ENCODE measurements at regions of chr12 and their contacts with region 1.

Region 1: DNA sequence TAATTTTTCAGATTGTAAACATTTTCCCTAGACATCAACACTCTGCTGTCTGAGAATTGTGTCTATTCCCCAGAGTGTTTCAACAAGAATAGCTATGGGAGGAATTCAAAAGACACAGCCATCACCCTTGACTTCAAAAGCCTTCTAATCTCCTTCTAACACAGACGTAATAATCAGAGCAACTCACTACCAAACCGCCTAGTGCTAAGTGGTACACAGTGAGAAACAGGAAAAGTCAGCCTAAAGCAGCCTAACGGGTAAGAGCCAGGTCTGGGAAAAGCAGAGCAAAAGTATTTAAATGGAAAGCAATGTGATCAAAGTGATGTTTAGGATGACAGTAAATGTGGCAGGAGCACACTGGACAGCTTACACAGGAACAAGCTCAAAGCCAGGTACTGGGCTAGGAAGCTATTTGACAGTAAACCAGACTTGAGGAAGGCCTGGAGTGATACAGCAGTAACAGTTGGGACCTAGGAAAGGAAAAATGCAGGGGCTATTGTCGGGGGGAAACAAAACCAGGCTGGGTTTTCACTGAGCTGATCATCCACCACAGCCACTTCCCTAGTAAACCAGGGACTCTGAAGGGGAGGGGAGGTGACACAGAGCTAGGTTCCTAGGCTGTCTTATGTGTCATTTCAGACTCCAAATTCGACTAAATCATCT is 29.4 kb downstream of the CORO1C start:
- DNase-seq: peak in 2 of 4 experiments; percentile 35 to 68
- ATAC-seq: peak; percentile 76
- H3K4me3 ChIP-seq: no peak overlapping the region
- H3K27ac ChIP-seq: peak overlapping the region; percentile 63
- H3K4me1 ChIP-seq: peaks cover 16 to 60% of the 10 kb centered on the region in 2 experiments
- H3K27me3 ChIP-seq: no peaks in the 10 kb centered on the region
- CTCF ChIP-seq: no peak
- EP300 ChIP-seq: peak; percentile 24; the same call in 1 of the 2 replicates
- POLR2A ChIP-seq: no peak
- RAD21 ChIP-seq: no peak

Region 2: DNA sequence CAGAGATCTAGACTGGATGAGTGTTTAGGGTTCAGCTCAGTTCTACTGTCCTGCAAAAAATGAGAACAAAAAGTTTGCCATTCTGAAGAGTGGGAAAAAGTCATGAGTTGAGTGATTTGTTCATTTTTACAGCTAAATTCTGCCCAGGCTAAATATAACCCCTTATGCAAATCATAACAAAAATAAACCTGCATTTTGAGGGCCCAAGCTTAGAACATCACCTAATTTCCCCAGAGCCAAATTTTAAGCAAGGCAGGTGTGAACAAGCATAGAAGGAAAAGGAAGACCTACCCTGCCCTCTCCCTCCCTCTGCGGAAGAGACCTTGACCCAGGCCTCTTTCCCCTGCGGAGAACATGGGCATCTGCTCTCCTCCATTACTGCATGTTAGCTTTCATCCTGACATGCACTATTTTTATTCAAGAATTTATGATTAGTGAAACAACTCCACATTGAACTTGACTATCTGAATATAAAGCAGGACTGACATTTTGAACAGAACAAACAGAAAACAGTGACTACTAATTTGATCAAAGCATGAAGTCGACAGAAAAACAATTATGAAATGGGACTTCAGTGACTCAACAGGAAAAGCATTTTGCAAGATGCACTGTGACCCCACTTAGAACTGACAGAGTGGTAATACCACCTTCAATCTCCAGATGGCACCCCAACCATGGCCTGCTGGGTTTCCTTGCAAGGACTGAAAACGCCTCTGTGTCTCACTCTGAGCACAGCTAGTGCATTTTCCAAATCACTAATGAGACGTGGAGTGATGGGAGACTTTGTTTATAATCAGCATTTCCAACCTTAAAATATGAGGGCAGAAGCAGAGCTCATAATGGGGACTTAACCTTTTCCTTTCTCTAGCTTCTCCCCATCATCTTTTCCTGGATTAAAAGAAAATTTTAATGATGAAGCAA is 37.3 kb before region 1 on chr12:
- CTCF ChIA-PET with region 1: no interaction called
- POLR2A ChIA-PET with region 1: no interaction called
- in situ Hi-C with region 1: no loop called
- intact Hi-C with region 1: no loop called
- DNase-seq: peak; percentile 74 to 88 (median 78)
- ATAC-seq: peak; percentile 98
- H3K4me3 ChIP-seq: no peak overlapping the region
- H3K27ac ChIP-seq: peak overlapping the region; percentile 60; the same call in 2 of the 3 replicates
- H3K4me1 ChIP-seq: peaks cover 0 to 13% of the 10 kb centered on the region in 2 experiments; a peak in 3 of 5 replicates
- H3K27me3 ChIP-seq: no peaks in the 10 kb centered on the region
- CTCF ChIP-seq: peak; percentile 90 to 96 (median 91)
- EP300 ChIP-seq: peak; percentile 12; the same call in 1 of the 2 replicates
- POLR2A ChIP-seq: no peak
- RAD21 ChIP-seq: peak; percentile 95 to 99

Region 3: GRCh38 chr12:108712165-108712924 is 10.4 kb after region 1 on chr12:
- CTCF ChIA-PET with region 1: no interaction called
- POLR2A ChIA-PET with region 1: interaction called, 52 read pairs
- in situ Hi-C with region 1: no loop called
- intact Hi-C with region 1: no loop called
- DNase-seq: no peak
- ATAC-seq: no peak
- H3K4me3 ChIP-seq: no peak overlapping the region
- H3K27ac ChIP-seq: no peak overlapping the region
- H3K4me1 ChIP-seq: peaks cover 18 to 26% of the 10 kb centered on the region in 2 experiments; a peak in 4 of 5 replicates
- H3K27me3 ChIP-seq: no peaks in the 10 kb centered on the region
- CTCF ChIP-seq: no peak
- EP300 ChIP-seq: no peak
- POLR2A ChIP-seq: no peak
- RAD21 ChIP-seq: no peak

Region 4: GRCh38 chr12:108731105-108731865 is 29.4 kb after region 1 on chr12 and contains the start of gene CORO1C:
- CTCF ChIA-PET with region 1: no interaction called
- POLR2A ChIA-PET with region 1: interaction called, 7 read pairs
- in situ Hi-C with region 1: no loop called
- intact Hi-C with region 1: loop called (anchors 2 kb)
- DNase-seq: peak; percentile 95 to 97 (median 96)
- ATAC-seq: peak; percentile 77
- H3K4me3 ChIP-seq: peak within 1 kb of the TSS; percentile 89
- H3K27ac ChIP-seq: peak within 1 kb of the TSS; percentile 93
- H3K4me1 ChIP-seq: peaks cover 21 to 32% of the 10 kb centered on the region in 2 experiments
- H3K27me3 ChIP-seq: no peaks in the 10 kb centered on the region
- CTCF ChIP-seq: peak; percentile 77 to 85 (median 80)
- EP300 ChIP-seq: no peak; the same call in 1 of the 2 replicates
- POLR2A ChIP-seq: peak; percentile 78
- RAD21 ChIP-seq: peak in 1 of 2 experiments; percentile 53; a peak in 3 of 4 replicates
- polyA plus RNA-seq, gene CORO1C: 55.2 to 68.6 TPM